AG04450 (cell line): ENCODE measurements at regions of chr6 and their contacts with region 1.

Region 1: GRCh38 chr6:37987018-37987417 is 167.5 kb downstream of the ZFAND3 start:
- DNase-seq: no peak
- H3K4me3 ChIP-seq: no peak overlapping the region
- H3K27ac ChIP-seq: no peak overlapping the region
- H3K27me3 ChIP-seq: no peaks in the 10 kb centered on the region
- CTCF ChIP-seq: no peak

Region 2: DNA sequence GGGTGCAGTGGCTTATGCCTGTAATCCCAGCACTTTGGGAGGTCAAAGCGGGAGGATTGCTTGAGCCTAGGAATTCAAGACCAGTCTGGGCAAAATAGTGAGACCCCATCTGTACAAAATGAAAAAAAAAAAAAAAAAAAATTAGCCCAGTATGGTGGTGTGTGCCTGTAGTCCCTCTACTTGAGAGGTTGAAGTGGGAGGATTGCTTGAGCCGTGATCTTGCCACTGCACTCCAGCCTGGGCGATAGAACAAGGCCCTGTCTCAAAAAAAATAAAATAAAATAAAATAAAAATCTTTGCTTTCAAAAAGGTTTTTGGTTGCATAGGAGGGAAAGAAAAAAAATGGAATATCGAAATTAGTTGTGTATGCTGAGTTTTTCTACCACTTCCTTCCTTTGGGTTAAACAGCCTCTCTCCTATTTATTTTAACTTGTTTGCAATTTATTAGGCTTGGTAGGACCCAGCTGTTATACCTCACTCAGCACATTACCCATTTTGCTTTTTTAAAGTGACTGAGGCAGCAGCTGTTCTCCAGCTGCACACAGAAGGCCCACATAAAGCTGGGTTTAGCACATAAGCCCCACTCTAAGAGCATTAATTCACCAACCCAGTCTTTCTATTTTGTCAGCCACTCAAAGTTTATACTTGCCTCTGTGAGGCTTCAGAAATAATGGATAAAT is 15.2 kb before region 1 on chr6:
- CTCF ChIA-PET with region 1: interaction called, 3 read pairs
- POLR2A ChIA-PET with region 1: interaction called, 11 read pairs
- DNase-seq: peak; percentile 70
- H3K4me3 ChIP-seq: no peak overlapping the region
- H3K27ac ChIP-seq: no peak overlapping the region
- H3K27me3 ChIP-seq: no peaks in the 10 kb centered on the region
- CTCF ChIP-seq: no peak